K562 (cell line): ENCODE measurements at regions of chr12 and their contacts with region 1.

Region 1: GRCh38 chr12:108337235-108338223 is 1.6 kb downstream of the CMKLR1 start:
- DNase-seq: peak; percentile 88 to 96 (median 92)
- ATAC-seq: peak; percentile 96
- H3K4me3 ChIP-seq: no peak overlapping the region
- H3K27ac ChIP-seq: peak overlapping the region; percentile 69
- H3K4me1 ChIP-seq: peaks cover 29 to 38% of the 10 kb centered on the region in 2 experiments; a peak in 4 of 5 replicates
- H3K27me3 ChIP-seq: no peaks in the 10 kb centered on the region
- CTCF ChIP-seq: peak; percentile 68 to 88 (median 82)
- EP300 ChIP-seq: peak; percentile 90; the same call in 1 of the 2 replicates
- POLR2A ChIP-seq: peak; percentile 55; the same call in 1 of the 2 replicates
- RAD21 ChIP-seq: peak; percentile 16 to 56; a peak in 3 of 4 replicates

Region 2: DNA sequence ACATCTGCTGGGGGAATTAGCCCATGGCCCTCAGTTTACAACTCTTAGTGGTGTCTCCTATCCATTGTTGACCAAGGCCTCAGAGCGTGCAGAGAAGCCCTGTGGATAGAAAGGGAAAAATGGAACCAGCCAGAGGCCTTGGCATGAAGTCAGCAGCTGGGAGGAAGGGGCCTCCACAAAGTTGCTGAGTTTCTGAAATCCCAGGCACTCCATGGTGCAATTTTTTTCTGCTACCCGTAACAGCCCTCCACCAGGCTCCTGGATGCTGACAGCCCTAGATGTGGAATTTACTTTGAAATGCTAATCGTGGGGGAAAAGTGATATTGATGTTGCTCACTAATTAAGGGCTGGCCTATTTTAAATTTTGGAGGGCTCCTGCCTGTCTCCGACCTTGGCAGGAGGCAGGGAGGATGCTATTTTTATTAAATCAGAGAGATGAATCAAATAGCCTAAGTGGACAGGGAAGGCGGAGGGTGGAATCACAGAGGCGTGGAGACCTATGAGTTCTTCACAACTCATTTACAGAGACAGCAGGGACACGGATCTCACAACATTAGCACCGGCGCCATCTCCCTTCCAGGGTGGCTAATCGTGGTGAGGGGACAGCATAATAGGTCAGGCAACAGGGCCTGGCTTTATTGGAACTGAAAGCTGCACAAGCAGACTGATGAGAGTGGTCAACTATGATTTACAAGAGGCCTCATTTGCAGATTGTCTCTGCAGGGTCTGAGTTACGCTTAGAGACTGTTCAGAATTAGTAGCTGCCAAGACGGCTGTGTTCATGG is 308.3 kb before region 1 on chr12:
- CTCF ChIA-PET with region 1: no interaction called
- POLR2A ChIA-PET with region 1: no interaction called
- in situ Hi-C with region 1: no loop called
- intact Hi-C with region 1: no loop called
- DNase-seq: no peak
- ATAC-seq: no peak
- H3K4me3 ChIP-seq: no peak overlapping the region
- H3K27ac ChIP-seq: no peak overlapping the region
- H3K4me1 ChIP-seq: no peaks in the 10 kb centered on the region
- H3K27me3 ChIP-seq: peaks cover 0 to 5% of the 10 kb centered on the region in 2 experiments; a peak in 2 of 5 replicates
- CTCF ChIP-seq: no peak
- EP300 ChIP-seq: no peak
- POLR2A ChIP-seq: no peak
- RAD21 ChIP-seq: no peak

Region 3: DNA sequence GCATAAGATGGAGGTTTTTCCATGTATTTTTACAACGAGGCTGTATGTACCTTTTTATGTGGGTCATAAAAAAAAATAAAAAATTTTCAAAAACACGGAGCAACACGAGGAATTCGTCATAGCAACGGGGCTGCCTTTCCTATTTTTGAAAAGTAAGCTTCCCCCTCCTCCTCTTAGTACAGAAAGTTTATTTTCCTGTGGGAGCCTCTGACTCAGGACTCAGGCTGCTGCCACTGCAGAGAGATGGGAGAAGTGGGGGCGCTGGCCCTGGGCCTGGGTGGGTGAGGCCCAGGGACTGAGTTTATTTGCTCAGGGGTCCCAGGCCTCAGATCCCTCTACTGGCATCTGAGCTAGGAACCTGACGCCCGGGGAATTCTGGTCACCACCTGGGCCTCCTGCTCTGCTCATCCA is 11.8 kb after region 1 on chr12:
- CTCF ChIA-PET with region 1: no interaction called
- POLR2A ChIA-PET with region 1: no interaction called
- in situ Hi-C with region 1: no loop called
- intact Hi-C with region 1: no loop called
- DNase-seq: no peak
- ATAC-seq: no peak
- H3K4me3 ChIP-seq: no peak overlapping the region
- H3K27ac ChIP-seq: no peak overlapping the region
- H3K4me1 ChIP-seq: no peaks in the 10 kb centered on the region; a peak in 1 of 5 replicates
- H3K27me3 ChIP-seq: no peaks in the 10 kb centered on the region
- CTCF ChIP-seq: no peak
- EP300 ChIP-seq: no peak
- POLR2A ChIP-seq: no peak
- RAD21 ChIP-seq: no peak

Region 4: GRCh38 chr12:108361606-108362005 is 24.1 kb after region 1 on chr12:
- CTCF ChIA-PET with region 1: no interaction called
- POLR2A ChIA-PET with region 1: no interaction called
- in situ Hi-C with region 1: no loop called
- intact Hi-C with region 1: loop called (anchors 1 kb)
- DNase-seq: no peak
- ATAC-seq: no peak
- H3K4me3 ChIP-seq: no peak overlapping the region
- H3K27ac ChIP-seq: no peak overlapping the region
- H3K4me1 ChIP-seq: no peaks in the 10 kb centered on the region
- H3K27me3 ChIP-seq: peaks cover 0 to 25% of the 10 kb centered on the region in 2 experiments; a peak in 3 of 5 replicates
- CTCF ChIP-seq: no peak
- EP300 ChIP-seq: no peak
- POLR2A ChIP-seq: no peak
- RAD21 ChIP-seq: no peak